GM13976 (cell line): ENCODE measurements at regions of chr16 and their contacts with region 1.

Region 1: GRCh38 chr16:50210266-50211038 is 55.9 kb upstream of the ADCY7 start:
- DNase-seq: peak; percentile 64
- CTCF ChIP-seq: peak; percentile 77

Region 2: DNA sequence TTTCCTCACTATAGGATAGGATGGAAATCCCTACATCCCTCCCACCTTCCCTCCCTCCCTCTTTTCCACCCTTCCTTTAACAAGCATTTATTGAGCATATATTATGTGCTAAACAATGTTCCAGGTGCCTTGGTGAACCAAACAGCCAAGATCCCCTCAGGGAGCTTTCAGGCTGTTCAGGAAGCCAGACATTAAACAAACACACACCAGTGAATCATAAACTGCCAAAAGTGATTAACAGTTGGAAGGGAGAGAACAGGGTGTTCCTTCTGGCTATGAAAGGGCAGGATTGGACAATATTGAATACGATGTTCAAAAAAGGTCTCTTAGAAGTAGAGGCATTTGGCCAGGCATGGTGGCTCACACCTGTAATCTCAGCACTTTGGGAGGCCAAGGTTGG is 208.3 kb before region 1 on chr16:
- in situ Hi-C with region 1: no loop called
- DNase-seq: no peak
- CTCF ChIP-seq: no peak

Region 3: DNA sequence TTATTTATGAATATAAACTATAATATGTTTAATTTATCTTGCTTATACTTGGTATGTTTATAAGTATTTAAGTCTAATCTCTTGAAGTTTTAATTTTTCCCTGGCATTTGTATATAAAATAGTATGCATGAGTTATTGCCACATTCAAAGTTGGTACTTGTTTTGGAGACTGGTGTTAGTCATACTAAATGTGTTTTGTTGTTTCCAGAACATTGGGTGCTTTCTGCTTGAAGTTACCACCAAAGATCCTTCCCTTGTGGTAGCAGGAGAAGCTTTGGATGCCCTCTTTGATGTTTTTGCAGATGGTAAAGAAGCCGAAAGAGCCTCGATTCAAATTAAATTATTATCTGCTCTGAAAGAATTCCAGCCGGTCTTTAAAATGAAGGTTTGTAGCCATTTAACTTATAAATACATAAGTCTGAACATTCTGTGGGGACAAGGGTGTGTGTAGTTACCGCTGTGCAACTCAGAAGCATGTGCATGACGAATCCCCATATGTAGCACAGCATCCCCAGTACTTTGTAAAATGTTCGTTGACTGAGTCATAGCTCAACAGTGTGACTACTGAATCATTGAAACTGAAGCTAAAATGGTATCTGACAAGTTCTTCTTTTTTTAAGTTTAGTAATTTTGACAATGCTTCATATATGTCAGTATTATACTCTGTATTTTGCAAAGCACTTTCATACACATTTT is 108.3 kb before region 1 on chr16:
- in situ Hi-C with region 1: no loop called
- DNase-seq: peak; percentile 40
- CTCF ChIP-seq: no peak

Region 4: DNA sequence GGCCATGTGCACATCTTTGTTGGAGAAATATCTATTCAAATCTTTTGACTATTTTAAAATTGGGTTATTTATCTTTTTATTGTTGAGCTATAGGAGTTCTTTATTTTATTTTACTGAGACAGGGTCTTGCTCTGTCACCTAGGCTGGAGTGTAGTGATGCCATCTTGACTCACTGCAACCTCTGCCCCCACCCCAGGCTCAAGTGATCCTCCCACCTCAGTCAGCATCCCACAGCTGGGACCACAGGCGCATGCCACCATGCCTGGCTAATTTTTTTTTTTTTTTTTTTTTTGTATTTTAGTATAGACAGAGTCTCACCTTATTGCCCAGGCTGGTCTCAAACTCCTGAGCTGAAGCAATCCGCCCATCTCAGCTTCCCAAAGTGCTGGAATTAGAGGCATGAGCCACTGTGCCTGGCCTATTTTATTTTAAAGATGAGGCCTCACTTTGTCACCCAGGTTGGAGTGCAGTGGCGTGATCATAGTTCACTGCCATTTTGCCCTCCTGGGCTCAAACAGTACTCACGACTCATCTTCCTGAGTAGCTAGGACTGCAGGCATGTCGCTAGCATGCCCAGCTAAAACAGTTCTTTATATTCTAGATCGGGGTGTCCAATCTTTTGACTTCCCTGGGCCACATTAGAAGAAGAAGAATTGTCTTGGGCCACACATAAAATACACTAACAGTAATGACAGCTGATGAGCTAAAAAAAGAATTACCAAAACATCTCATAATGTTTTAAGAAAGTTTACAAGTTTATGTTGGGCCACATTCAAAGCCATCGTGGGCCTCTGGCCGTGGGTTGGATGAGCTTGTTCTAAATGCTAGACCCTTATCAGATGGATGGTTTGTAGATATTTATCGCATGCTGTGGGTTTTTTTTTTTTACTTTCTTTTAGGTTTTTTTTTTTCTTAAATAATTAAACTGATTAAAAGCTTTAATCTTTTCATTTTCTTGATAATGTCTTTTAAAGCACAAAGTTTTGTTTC is 43.6 kb before region 1 on chr16:
- in situ Hi-C with region 1: no loop called
- DNase-seq: no peak
- CTCF ChIP-seq: no peak

Region 5: DNA sequence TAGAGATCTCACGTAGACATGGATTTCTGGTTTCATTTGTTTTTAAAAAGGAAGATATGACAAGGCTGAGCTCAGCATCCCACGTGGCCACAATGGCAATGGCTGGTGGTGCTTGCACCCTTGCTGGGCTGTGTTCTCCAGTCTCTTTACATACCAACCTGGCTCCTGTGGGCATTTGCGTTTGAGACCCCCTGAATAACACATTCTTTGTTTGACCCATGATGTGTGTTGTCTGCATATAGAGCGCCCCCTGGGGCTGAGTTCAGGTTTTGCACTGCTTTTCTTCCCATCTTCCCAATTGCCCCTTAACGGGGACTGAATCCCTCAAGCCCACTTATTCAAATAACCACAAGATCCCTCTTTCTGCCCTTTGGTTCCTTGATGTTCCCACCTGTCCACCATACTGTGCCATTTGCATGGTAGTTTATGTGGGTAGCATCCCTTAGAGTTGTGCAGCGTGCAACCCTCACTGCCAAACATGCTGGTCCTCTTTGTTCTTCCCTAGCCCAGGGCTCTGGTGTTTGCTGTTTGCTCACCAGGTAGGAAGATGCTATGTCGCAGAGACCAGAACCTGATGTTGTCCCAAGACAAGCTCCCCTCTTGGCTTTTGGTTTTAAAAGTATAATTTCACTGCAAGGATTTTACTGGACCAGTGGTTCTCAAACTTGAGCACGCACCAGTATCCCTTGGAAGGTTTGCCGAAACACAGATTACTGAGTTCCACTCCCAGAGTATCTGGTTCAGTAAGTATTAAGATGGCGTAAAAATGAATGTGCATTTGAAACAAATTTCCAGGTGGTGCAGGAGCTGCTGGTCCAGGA is 299.3 kb after region 1 on chr16:
- in situ Hi-C with region 1: loop called (anchors 25 kb)
- DNase-seq: peak; percentile 58
- CTCF ChIP-seq: peak; percentile 63

Region 6: GRCh38 chr16:50665128-50665878 is 454.9 kb after region 1 on chr16:
- in situ Hi-C with region 1: no loop called
- DNase-seq: peak; percentile 80
- CTCF ChIP-seq: peak; percentile 73